Panc1 (cell line): ENCODE measurements at regions of chr6 and their contacts with region 1.

Region 1: DNA sequence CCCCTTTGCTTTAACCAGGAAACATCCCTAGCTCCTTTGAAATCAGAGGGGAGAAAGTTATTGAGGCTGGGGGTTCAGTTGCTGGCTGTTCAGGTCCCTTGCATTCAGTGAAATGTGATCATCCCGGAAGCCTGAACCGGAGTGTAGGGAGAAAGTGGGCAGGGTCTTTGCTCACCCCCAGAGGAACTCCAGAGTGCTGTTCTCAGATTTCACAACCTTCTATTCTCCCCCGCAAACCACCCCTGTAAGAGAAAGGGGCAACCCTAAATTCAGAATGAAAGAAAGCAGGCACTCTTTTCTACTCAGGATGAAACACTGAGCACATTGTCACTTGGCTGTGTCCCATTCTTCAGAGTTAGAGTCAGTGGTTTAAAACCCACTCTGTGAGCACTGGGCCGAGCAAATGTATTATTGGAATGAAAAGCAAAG is 139.8 kb downstream of the KHDC1L start:
- DNase-seq: no peak
- ATAC-seq: no peak
- H3K4me3 ChIP-seq: no peak overlapping the region
- H3K27ac ChIP-seq: no peak overlapping the region
- H3K4me1 ChIP-seq: peaks cover 3% of the 10 kb centered on the region
- H3K27me3 ChIP-seq: no peaks in the 10 kb centered on the region
- CTCF ChIP-seq: no peak

Region 2: DNA sequence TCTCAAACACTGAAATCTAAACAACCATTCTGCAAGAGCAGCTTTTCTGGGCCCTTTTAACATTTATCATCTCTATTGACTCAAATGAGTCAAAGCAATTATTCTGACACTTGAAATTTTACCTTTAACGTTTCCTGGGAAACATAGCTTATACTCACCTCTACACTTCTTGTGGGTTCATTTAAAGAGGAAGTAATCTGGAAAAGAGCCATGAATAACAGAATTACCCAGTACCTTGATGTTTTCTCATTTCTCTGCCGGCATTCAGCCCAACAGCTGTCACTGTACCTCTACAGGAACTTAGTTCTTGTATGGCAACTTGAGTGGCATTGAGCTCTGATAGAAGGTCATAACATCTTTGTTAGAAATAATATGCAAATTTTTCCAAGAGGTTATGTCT is 191.4 kb before region 1 on chr6:
- CTCF ChIA-PET with region 1: no interaction called
- POLR2A ChIA-PET with region 1: no interaction called
- in situ Hi-C with region 1: no loop called
- intact Hi-C with region 1: no loop called
- DNase-seq: no peak
- ATAC-seq: no peak
- H3K4me3 ChIP-seq: no peak overlapping the region
- H3K27ac ChIP-seq: no peak overlapping the region
- H3K4me1 ChIP-seq: no peaks in the 10 kb centered on the region
- H3K27me3 ChIP-seq: no peaks in the 10 kb centered on the region
- CTCF ChIP-seq: no peak; the same call in 1 of the 2 replicates

Region 3: DNA sequence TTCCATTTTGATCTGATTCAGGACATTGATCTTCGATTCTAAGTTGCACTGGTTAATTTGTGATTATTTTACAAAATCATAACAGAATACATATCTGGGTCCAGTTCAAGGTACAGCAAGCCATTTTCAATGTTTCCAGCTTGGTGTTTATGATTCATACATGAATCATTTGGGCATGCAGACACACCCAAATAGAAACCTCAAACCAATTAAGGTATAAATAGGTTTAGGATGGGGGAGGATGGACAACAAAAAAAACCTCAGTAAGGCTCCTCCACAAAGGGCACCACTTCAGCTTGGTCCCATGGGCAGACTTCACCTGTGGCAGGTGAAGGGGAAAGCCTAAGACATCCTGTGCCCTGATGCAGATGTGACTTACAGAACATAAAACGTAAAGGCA is 52.9 kb before region 1 on chr6:
- CTCF ChIA-PET with region 1: no interaction called
- POLR2A ChIA-PET with region 1: interaction called, 11 read pairs
- in situ Hi-C with region 1: no loop called
- intact Hi-C with region 1: no loop called
- DNase-seq: peak; percentile 77
- ATAC-seq: peak; percentile 53; the same call in 1 of the 2 replicates
- H3K4me3 ChIP-seq: no peak overlapping the region
- H3K27ac ChIP-seq: no peak overlapping the region
- H3K4me1 ChIP-seq: peaks cover 16% of the 10 kb centered on the region
- H3K27me3 ChIP-seq: no peaks in the 10 kb centered on the region
- CTCF ChIP-seq: no peak

Region 4: DNA sequence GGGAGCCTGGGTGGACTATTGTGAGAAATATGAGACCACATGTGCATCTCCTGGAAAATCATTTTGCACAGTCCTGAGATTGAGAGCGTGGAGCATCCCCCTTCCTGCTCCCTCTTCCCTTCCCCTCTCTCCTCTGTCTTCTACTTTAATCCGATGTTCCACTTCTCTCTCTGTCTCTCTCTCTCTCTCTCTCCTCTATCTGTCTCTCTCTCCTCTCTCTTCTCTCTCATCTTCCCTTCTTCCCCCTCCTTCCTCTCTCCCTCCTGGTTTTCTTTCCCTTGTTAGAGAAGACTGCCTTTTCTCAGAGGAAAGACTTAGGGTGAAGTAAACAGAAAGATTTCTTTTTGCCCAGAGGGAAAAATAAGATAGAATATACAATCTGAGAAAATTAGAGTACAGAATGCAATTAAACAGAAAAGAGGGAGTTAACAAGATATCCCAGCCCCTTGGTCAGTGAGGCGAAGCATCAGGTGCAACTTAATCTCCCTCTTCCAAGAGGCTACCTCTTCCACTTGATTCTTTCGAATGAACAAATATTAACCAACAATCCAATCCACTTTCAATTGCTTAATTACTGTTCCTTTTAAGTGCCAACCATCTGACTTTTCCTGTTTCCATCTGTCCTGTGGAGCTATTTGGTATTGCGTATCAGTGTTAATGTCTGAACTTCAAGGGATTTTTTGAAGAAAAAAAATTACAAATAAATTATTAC is 162.9 kb after region 1 on chr6:
- CTCF ChIA-PET with region 1: no interaction called
- POLR2A ChIA-PET with region 1: no interaction called
- in situ Hi-C with region 1: no loop called
- intact Hi-C with region 1: no loop called
- DNase-seq: no peak
- ATAC-seq: peak; percentile 58; the same call in 1 of the 2 replicates
- H3K4me3 ChIP-seq: no peak overlapping the region
- H3K27ac ChIP-seq: no peak overlapping the region
- H3K4me1 ChIP-seq: no peaks in the 10 kb centered on the region
- H3K27me3 ChIP-seq: no peaks in the 10 kb centered on the region; the same call in 1 of the 2 replicates
- CTCF ChIP-seq: no peak